ENCODE measurements at regions of chr7 and their contacts with region 1.

Region 1: GRCh38 chr7:24572997-24573625 is at the start of gene PALS2:
- DNase-seq: peak; percentile 61 to 92 (median 80)
- ATAC-seq: peak; percentile 76
- H3K4me3 ChIP-seq: peak within 1 kb of the TSS; percentile 84
- H3K4me3 Mint-ChIP-seq: peak within 1 kb of the TSS; percentile 97
- H3K27ac ChIP-seq: peak within 1 kb of the TSS; percentile 35 to 49
- H3K27ac Mint-ChIP-seq: peak within 1 kb of the TSS; percentile 91
- H3K4me1 ChIP-seq: peaks cover 19% of the 10 kb centered on the region
- H3K4me1 Mint-ChIP-seq: peaks cover 43% of the 10 kb centered on the region
- H3K27me3 ChIP-seq: no peaks in the 10 kb centered on the region
- H3K27me3 Mint-ChIP-seq: no peaks in the 10 kb centered on the region
- CTCF ChIP-seq: no peak
- total RNA-seq, gene PALS2: 35.0 to 53.2 TPM

Region 2: GRCh38 chr7:22822486-22823141 is 1750.5 kb before region 1 on chr7 and contains the start of gene TOMM7:
- CTCF ChIA-PET with region 1: no interaction called
- POLR2A ChIA-PET with region 1: no interaction called
- intact Hi-C with region 1: loop called in 1 of 2 experiments (anchors 10 kb)
- DNase-seq: peak; percentile 75 to 98 (median 84)
- ATAC-seq: peak; percentile 93
- H3K4me3 ChIP-seq: peak within 1 kb of the TSS; percentile 65
- H3K4me3 Mint-ChIP-seq: peak within 1 kb of the TSS; percentile 98
- H3K27ac ChIP-seq: peak within 1 kb of the TSS; percentile 46 to 66
- H3K27ac Mint-ChIP-seq: peak within 1 kb of the TSS; percentile 92
- H3K4me1 ChIP-seq: peaks cover 28% of the 10 kb centered on the region
- H3K4me1 Mint-ChIP-seq: peaks cover 49% of the 10 kb centered on the region
- H3K27me3 ChIP-seq: no peaks in the 10 kb centered on the region
- H3K27me3 Mint-ChIP-seq: peaks cover 15% of the 10 kb centered on the region
- CTCF ChIP-seq: no peak
- total RNA-seq, gene TOMM7: 503 to 549 TPM

Region 3: GRCh38 chr7:23531794-23532489 is 1041.2 kb before region 1 on chr7 and contains the start of gene TRA2A:
- CTCF ChIA-PET with region 1: no interaction called
- POLR2A ChIA-PET with region 1: no interaction called
- intact Hi-C with region 1: loop called in 1 of 2 experiments (anchors 10 kb)
- DNase-seq: peak; percentile 92 to 99 (median 97)
- ATAC-seq: peak; percentile 91
- H3K4me3 ChIP-seq: peak within 1 kb of the TSS; percentile 97
- H3K4me3 Mint-ChIP-seq: peak within 1 kb of the TSS; percentile 94
- H3K27ac ChIP-seq: peak within 1 kb of the TSS; percentile 95 to 98
- H3K27ac Mint-ChIP-seq: peak within 1 kb of the TSS; percentile 97
- H3K4me1 ChIP-seq: peaks cover 29% of the 10 kb centered on the region
- H3K4me1 Mint-ChIP-seq: peaks cover 49% of the 10 kb centered on the region
- H3K27me3 ChIP-seq: no peaks in the 10 kb centered on the region
- H3K27me3 Mint-ChIP-seq: no peaks in the 10 kb centered on the region
- CTCF ChIP-seq: no peak
- total RNA-seq, gene TRA2A: 246 to 275 TPM

Region 4: DNA sequence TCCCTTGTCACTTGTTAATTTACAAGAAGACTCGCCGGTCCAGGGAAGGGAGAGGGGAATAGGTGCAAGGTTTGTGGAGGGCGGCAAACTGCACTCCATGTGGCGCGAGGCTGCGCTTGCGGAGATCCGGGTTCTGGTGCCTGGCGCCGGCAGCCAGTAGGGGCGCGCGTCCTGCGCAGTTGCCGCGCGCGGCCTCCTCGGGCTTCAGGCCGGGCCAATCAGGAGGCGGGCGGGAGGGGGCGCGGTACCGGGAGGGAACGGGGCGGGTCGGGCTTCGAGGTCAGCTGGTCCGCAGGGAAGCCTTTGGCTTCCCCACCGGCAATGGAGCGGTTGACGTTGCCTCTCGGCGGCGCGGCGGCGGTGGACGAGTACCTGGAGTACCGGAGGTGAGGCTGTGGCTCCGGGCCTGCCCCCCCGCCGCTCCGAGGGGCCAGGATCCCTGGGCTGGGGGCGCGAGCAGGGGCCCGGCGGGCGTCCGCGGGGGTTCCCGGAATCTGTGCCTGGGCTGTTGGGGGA is 893.2 kb before region 1 on chr7 and contains the start of gene FAM221A:
- CTCF ChIA-PET with region 1: no interaction called
- POLR2A ChIA-PET with region 1: no interaction called
- intact Hi-C with region 1: loop called in 1 of 2 experiments (anchors 5 kb)
- DNase-seq: peak; percentile 60 to 91 (median 77)
- ATAC-seq: peak; percentile 95
- H3K4me3 ChIP-seq: peak within 1 kb of the TSS; percentile 81
- H3K4me3 Mint-ChIP-seq: peak within 1 kb of the TSS; percentile 95
- H3K27ac ChIP-seq: peak within 1 kb of the TSS; percentile 1 to 56
- H3K27ac Mint-ChIP-seq: peak within 1 kb of the TSS; percentile 85
- H3K4me1 ChIP-seq: peaks cover 12% of the 10 kb centered on the region
- H3K4me1 Mint-ChIP-seq: peaks cover 14% of the 10 kb centered on the region
- H3K27me3 ChIP-seq: no peaks in the 10 kb centered on the region
- H3K27me3 Mint-ChIP-seq: peaks cover 7% of the 10 kb centered on the region
- CTCF ChIP-seq: peak; percentile 82
- total RNA-seq, gene FAM221A: 1.8 to 2.8 TPM

Region 5: DNA sequence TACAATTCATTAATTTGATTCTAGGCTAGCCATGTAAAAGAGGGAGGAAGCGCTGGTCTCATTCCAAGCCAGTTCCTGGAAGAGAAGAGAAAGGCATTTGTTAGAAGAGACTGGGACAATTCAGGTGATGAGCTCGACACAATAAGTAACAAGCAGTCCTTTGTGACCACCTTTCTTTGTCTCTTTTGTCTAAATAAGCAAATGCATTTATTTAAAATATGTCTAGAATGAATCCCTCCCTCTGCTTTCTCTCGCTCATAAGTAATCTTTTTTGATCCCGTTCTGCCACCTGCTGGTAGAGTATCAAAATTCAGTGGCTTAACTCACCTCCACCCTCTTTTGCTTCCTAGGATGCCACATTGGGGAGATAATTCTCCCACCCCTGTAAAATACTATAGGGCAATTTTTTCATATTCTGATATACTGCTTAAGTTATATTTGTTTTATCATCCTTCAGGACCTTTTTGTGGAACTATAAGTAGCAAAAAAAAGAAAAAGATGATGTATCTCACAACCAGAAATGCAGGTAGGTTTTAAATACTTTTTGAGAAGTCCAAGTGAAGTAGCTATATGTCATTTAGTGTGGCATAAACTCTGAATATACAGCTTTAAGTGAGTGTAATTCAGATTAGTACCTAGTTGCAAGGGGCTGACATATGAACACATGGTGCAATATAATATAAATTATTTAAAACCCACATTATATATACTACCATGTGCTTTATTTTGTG is 92.6 kb after region 1 on chr7:
- CTCF ChIA-PET with region 1: no interaction called
- POLR2A ChIA-PET with region 1: no interaction called
- intact Hi-C with region 1: loop called in 1 of 2 experiments (anchors 5 kb)
- DNase-seq: peak in 12 of 14 experiments; percentile 3 to 69 (median 18)
- ATAC-seq: peak; percentile 39
- H3K4me3 ChIP-seq: no peak overlapping the region
- H3K4me3 Mint-ChIP-seq: no peak overlapping the region
- H3K27ac ChIP-seq: no peak overlapping the region
- H3K27ac Mint-ChIP-seq: no peak overlapping the region
- H3K4me1 ChIP-seq: no peaks in the 10 kb centered on the region
- H3K4me1 Mint-ChIP-seq: no peaks in the 10 kb centered on the region
- H3K27me3 ChIP-seq: no peaks in the 10 kb centered on the region
- H3K27me3 Mint-ChIP-seq: no peaks in the 10 kb centered on the region
- CTCF ChIP-seq: peak; percentile 86

Region 6: DNA sequence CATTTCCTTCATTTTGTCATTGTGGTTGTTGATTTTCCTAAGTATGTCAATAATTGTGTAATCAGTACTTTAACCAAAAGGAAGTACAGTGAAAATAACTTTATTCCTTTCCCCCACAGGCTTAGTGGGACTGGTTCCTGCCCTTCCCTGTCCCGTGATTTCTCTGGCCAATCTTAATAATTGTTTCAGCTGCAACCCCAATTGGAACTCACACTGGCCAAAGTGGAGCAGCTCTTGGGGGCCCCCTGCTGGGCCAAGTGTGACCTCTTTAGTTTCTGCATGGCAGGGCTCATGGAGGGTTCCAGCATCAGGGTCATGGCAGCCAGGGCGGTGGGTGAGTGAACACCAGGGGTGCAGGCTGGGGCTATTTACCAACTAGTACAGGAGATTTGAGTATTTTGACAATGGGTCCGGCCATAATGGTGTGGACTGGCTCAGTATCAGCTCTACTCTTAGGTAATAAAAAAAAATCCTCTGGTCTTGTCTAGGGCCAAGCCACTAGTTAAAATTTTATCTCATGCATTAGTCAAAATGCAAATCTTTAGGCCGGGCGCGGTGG is 520.2 kb after region 1 on chr7:
- CTCF ChIA-PET with region 1: no interaction called
- POLR2A ChIA-PET with region 1: no interaction called
- intact Hi-C with region 1: loop called in 1 of 2 experiments (anchors 10 kb)
- DNase-seq: peak; percentile 59 to 82 (median 70)
- ATAC-seq: peak; percentile 80
- H3K4me3 ChIP-seq: no peak overlapping the region
- H3K4me3 Mint-ChIP-seq: no peak overlapping the region
- H3K27ac ChIP-seq: no peak overlapping the region
- H3K27ac Mint-ChIP-seq: no peak overlapping the region
- H3K4me1 ChIP-seq: peaks cover 9% of the 10 kb centered on the region
- H3K4me1 Mint-ChIP-seq: peaks cover 12% of the 10 kb centered on the region
- H3K27me3 ChIP-seq: no peaks in the 10 kb centered on the region
- H3K27me3 Mint-ChIP-seq: peaks cover 4% of the 10 kb centered on the region
- CTCF ChIP-seq: peak; percentile 93

Region 7: GRCh38 chr7:25179771-25180591 is 606.9 kb after region 1 on chr7:
- CTCF ChIA-PET with region 1: no interaction called
- POLR2A ChIA-PET with region 1: no interaction called
- intact Hi-C with region 1: loop called in 1 of 2 experiments (anchors 5 kb)
- DNase-seq: peak; percentile 89 to 98 (median 95)
- ATAC-seq: peak; percentile 96
- H3K4me3 ChIP-seq: peak overlapping the region; percentile 77
- H3K4me3 Mint-ChIP-seq: peak overlapping the region; percentile 92
- H3K27ac ChIP-seq: peak overlapping the region; percentile 56 to 68
- H3K27ac Mint-ChIP-seq: peak overlapping the region; percentile 80
- H3K4me1 ChIP-seq: peaks cover 18% of the 10 kb centered on the region
- H3K4me1 Mint-ChIP-seq: peaks cover 24% of the 10 kb centered on the region
- H3K27me3 ChIP-seq: no peaks in the 10 kb centered on the region
- H3K27me3 Mint-ChIP-seq: no peaks in the 10 kb centered on the region
- CTCF ChIP-seq: peak; percentile 90

Measured in CD4-positive, alpha-beta T cell (primary cell).